ENCODE measurements at regions of chr20 and their contacts with region 1.

Region 1: DNA sequence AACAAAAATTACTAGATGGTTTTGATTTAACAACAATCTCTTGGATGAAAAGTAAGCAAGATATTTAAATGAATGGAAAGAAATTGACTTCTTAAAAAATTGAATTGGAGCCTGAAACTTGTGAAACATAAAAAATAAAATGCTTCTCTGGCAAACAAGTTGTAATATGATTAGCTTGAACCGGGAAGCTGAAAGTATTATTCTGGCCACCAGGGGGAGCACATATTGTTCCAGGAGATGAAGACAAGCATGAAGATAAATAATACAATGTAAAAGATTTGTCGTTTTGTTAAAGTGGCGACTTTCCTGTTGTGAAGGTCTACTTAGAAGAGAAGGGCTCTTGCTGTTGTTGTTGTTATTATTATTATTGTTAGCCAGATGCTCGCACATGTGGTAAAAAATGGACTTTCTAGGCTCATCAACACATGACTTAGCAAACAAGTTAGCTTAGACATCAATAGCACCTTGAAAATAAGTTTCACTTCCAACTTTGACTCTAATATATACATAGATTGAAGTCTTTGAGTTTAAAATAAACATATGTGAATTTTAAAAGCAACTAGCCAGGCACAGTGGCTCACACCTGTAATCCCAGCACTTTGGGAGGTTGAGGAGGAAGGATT is 14.2 kb downstream of the PAX1 start:
- DNase-seq: peak; percentile 69
- H3K4me3 Mint-ChIP-seq: no peak overlapping the region
- H3K27ac Mint-ChIP-seq: no peak overlapping the region
- H3K4me1 Mint-ChIP-seq: no peaks in the 10 kb centered on the region
- H3K27me3 Mint-ChIP-seq: peaks cover 40% of the 10 kb centered on the region
- CTCF ChIP-seq: peak; percentile 57

Region 2: GRCh38 chr20:20956513-20956931 is 763.2 kb before region 1 on chr20:
- CTCF ChIA-PET with region 1: no interaction called
- POLR2A ChIA-PET with region 1: no interaction called
- intact Hi-C with region 1: no loop called
- DNase-seq: no peak
- H3K4me3 Mint-ChIP-seq: no peak overlapping the region
- H3K27ac Mint-ChIP-seq: no peak overlapping the region
- H3K4me1 Mint-ChIP-seq: peaks cover 7% of the 10 kb centered on the region
- H3K27me3 Mint-ChIP-seq: peaks cover 40% of the 10 kb centered on the region
- CTCF ChIP-seq: no peak

Region 3: DNA sequence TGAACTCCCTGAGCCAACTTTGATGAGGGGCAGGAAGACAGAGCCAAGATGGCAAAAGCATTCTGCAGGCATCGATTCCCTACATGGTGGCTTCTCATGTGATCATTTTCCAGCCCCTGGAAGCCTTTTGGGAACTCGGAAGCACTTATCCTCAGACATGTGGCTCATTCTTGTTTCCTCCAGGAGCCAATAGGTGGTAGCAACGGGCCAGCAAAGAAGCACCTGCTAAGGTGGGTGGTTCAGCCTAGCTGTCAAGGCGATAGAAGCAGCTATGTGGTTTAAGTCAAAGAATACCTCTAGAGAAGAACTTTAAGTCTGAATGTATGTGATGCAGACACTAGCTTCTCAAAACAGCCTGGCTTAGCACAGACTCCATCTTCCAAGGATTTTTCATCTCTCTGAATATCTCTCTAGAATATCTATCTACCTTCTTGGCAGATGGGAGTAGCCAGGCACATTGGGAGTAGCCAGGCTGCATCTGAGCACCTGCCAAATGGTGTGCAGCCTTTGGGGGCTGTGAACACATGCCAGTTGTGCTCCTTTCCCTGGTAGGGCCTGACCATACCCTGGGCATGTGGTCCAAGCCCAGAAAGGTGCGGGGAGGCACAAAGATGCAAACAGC is 79.0 kb before region 1 on chr20:
- CTCF ChIA-PET with region 1: interaction called, 24 read pairs
- POLR2A ChIA-PET with region 1: no interaction called
- intact Hi-C with region 1: loop called (anchors 2 kb)
- DNase-seq: peak; percentile 45
- H3K4me3 Mint-ChIP-seq: no peak overlapping the region
- H3K27ac Mint-ChIP-seq: no peak overlapping the region
- H3K4me1 Mint-ChIP-seq: no peaks in the 10 kb centered on the region
- H3K27me3 Mint-ChIP-seq: peaks cover 17% of the 10 kb centered on the region
- CTCF ChIP-seq: peak; percentile 37

Region 4: DNA sequence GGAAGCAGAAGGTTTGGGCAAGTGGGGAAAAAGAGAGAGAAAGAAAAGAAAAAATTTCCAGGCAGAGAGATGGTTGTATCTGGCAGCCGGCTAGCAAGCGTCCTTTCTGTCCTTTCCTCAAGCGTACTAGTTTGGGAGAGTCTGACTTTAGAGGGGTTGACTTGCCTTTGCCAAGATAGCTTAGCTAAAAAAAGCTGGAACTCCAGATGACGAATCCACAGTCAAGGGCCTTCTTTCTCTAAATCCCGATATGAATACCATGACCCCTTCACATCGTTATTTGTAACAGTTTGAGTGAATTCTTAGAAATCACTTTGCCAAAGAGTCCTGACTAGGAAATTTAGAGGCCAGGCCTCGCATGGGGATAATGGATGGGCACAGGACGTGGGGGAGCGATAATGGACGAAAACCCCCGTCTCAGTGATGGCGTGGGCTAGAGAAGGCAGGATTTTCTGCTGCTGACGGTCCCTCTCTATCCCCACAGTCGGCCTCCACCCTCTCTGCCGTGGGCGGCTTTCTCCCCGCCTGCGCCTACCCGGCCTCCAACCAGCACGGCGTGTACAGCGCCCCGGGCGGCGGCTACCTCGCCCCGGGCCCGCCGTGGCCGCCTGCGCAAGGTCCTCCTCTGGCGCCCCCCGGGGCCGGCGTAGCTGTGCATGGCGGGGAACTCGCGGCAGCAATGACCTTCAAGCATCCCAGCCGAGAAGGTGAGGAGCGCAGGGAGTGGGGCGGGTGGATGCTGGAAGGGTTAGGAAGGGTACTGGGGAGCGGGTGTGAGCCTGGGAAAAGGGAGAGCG is 10.8 kb before region 1 on chr20:
- CTCF ChIA-PET with region 1: interaction called, 33 read pairs
- POLR2A ChIA-PET with region 1: interaction called, 5 read pairs
- intact Hi-C with region 1: no loop called
- DNase-seq: no peak
- H3K4me3 Mint-ChIP-seq: no peak overlapping the region
- H3K27ac Mint-ChIP-seq: no peak overlapping the region
- H3K4me1 Mint-ChIP-seq: no peaks in the 10 kb centered on the region
- H3K27me3 Mint-ChIP-seq: peaks cover 86% of the 10 kb centered on the region
- CTCF ChIP-seq: no peak

Region 5: GRCh38 chr20:21956591-21956990 is 236.9 kb after region 1 on chr20:
- CTCF ChIA-PET with region 1: no interaction called
- POLR2A ChIA-PET with region 1: no interaction called
- intact Hi-C with region 1: no loop called
- DNase-seq: no peak
- H3K4me3 Mint-ChIP-seq: no peak overlapping the region
- H3K27ac Mint-ChIP-seq: no peak overlapping the region
- H3K4me1 Mint-ChIP-seq: no peaks in the 10 kb centered on the region
- H3K27me3 Mint-ChIP-seq: peaks cover 16% of the 10 kb centered on the region
- CTCF ChIP-seq: no peak

Region 6: GRCh38 chr20:22106308-22106938 is 386.7 kb after region 1 on chr20:
- CTCF ChIA-PET with region 1: interaction called, 57 read pairs
- POLR2A ChIA-PET with region 1: no interaction called
- intact Hi-C with region 1: loop called (anchors 1 kb)
- DNase-seq: peak; percentile 3
- H3K4me3 Mint-ChIP-seq: no peak overlapping the region
- H3K27ac Mint-ChIP-seq: no peak overlapping the region
- H3K4me1 Mint-ChIP-seq: no peaks in the 10 kb centered on the region
- H3K27me3 Mint-ChIP-seq: peaks cover 63% of the 10 kb centered on the region
- CTCF ChIP-seq: peak; percentile 72

Region 7: GRCh38 chr20:22305381-22305780 is 585.7 kb after region 1 on chr20:
- CTCF ChIA-PET with region 1: interaction called, 10 read pairs
- POLR2A ChIA-PET with region 1: interaction called, 3 read pairs
- intact Hi-C with region 1: no loop called
- DNase-seq: no peak
- H3K4me3 Mint-ChIP-seq: no peak overlapping the region
- H3K27ac Mint-ChIP-seq: no peak overlapping the region
- H3K4me1 Mint-ChIP-seq: peaks cover 21% of the 10 kb centered on the region
- H3K27me3 Mint-ChIP-seq: no peaks in the 10 kb centered on the region
- CTCF ChIP-seq: no peak